Pancreas (tissue), 10 donors: ENCODE measurements at regions of chr3 and their contacts with region 1.

Region 1: DNA sequence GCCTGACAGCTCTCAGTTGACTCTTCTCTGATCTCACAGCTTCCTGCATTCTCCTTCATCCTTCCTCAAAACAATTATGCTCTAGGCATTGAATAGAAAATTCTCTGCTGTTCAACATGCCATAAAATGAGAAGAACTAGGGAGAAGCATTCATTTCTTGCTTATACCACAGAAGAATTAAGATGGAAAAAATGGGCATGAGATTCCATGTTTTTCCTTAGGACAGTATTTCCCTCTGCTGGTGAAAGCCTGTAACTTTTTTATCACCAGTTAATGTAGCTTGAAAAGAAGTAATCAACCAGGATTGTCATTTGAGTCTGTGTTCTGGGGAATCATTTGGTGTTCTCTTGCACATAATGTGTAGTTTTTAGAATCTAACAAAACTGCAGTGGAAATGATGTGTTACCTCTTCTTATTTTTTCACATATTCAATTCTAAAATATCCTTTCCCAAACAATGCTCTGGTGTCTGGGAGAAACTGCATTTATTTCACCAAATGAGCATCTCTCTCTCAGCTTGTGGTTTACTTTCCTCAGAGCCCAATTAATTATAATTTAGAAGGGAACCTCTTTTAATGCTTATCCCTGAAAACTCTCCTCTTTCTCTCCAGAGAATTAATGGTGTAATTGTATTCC is 92.8 kb upstream of the DCBLD2 start:
- DNase-seq: no peak
- ATAC-seq: peak in 3 of 4 donors; percentile 59 to 70 (median 60)
- H3K4me3 ChIP-seq: no peak overlapping the region
- H3K27ac ChIP-seq: no peak overlapping the region
- H3K4me1 ChIP-seq: no peaks in the 10 kb centered on the region
- H3K27me3 ChIP-seq: no peaks in the 10 kb centered on the region
- CTCF ChIP-seq: peak; percentile 27 to 56 (median 38)

Region 2: GRCh38 chr3:98593046-98593936 is 401.0 kb before region 1 on chr3 and contains the start of gene CPOX:
- intact Hi-C with region 1: loop called in 1 of 3 experiments (anchors 10 kb)
- DNase-seq: peak; percentile 72 to 93 (median 83)
- ATAC-seq: peak; percentile 95 to 98 (median 98)
- H3K4me3 ChIP-seq: peak within 1 kb of the TSS; percentile 82 to 92 (median 86)
- H3K27ac ChIP-seq: peak within 1 kb of the TSS in 3 of 4 donors; percentile 7 to 82 (median 60)
- H3K4me1 ChIP-seq: peaks cover 0 to 13% (median 5%) of the 10 kb centered on the region in 3 donors
- H3K27me3 ChIP-seq: no peaks in the 10 kb centered on the region
- CTCF ChIP-seq: no peak
- total RNA-seq, gene CPOX: 4.1 to 9.5 (median 5.3) TPM